ENCODE measurements at regions of chr2 and their contacts with region 1.

Region 1: GRCh38 chr2:216283038-216283900 is 89.0 kb downstream of the MARCHF4 start:
- DNase-seq: peak; percentile 93
- ATAC-seq: peak; percentile 96
- H3K4me3 Mint-ChIP-seq: peak overlapping the region; percentile 12; the same call in 1 of the 2 replicates
- H3K27ac Mint-ChIP-seq: no peak overlapping the region
- H3K4me1 Mint-ChIP-seq: peaks cover 66% of the 10 kb centered on the region
- H3K27me3 Mint-ChIP-seq: no peaks in the 10 kb centered on the region; the same call in 1 of the 2 replicates
- CTCF ChIP-seq: peak; percentile 78

Region 2: DNA sequence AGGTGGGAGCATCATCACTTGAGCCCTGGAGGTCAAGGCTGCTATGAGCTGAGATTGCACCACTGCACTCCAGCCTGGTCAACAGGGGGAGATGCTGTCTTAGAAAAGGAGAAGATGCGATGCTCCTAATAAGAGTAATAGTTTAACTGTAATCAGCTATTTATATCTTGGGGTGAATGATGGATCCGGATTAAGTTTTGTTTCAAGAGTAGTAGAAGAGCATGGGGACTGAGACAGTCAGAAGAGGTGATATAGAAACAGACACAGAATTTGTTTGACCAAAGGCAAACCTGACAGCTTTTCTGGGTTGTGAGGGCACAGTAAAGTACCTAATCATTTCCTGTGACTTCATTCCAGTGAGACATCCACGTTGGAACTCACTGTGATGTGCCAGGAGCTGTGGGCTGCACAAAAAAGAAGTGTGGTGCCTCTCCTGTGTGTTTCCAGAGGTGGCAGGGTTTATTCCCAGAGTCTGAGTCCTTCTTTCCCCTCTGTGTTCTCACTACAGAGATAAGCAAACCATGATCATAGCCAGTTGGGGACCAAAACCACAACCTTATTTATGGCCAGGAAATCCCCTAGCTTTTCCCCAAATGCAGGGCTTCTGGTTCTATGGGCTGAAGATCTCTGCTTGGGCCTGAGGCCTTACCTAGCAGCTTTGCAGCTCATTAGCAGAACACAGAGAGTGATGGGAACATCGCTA is 60.5 kb before region 1 on chr2:
- CTCF ChIA-PET with region 1: interaction called, 40 read pairs
- POLR2A ChIA-PET with region 1: no interaction called
- DNase-seq: peak; percentile 23
- ATAC-seq: peak; percentile 77
- H3K4me3 Mint-ChIP-seq: no peak overlapping the region
- H3K27ac Mint-ChIP-seq: no peak overlapping the region
- H3K4me1 Mint-ChIP-seq: no peaks in the 10 kb centered on the region; the same call in 1 of the 2 replicates
- H3K27me3 Mint-ChIP-seq: no peaks in the 10 kb centered on the region
- CTCF ChIP-seq: peak; percentile 15; the same call in 1 of the 2 replicates

Region 3: DNA sequence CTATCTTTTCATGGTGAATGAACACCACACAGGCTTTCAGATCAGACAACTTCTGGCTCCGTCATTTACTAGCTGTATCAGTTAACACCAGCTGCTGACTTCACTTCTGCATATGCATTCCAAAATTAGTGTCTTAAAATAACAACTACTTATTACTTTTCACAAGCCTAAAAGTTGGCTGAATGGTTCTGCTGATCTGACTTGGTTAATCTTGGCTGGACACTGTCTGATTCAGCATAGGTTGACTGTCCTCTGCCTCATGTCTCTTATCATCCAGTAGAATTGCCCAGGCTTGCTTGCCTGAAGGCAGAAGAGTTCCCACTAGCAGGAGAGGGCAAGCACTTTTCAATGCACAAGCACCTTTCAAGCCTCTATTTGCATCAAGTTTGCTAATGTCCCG is 16.3 kb after region 1 on chr2:
- CTCF ChIA-PET with region 1: interaction called, 38 read pairs
- POLR2A ChIA-PET with region 1: no interaction called
- DNase-seq: no peak
- ATAC-seq: peak; percentile 45
- H3K4me3 Mint-ChIP-seq: no peak overlapping the region
- H3K27ac Mint-ChIP-seq: no peak overlapping the region
- H3K4me1 Mint-ChIP-seq: peaks cover 33% of the 10 kb centered on the region
- H3K27me3 Mint-ChIP-seq: peaks cover 19% of the 10 kb centered on the region
- CTCF ChIP-seq: no peak

Region 4: GRCh38 chr2:216328347-216328746 is 45.1 kb after region 1 on chr2:
- CTCF ChIA-PET with region 1: interaction called, 15 read pairs
- POLR2A ChIA-PET with region 1: no interaction called
- DNase-seq: peak; percentile 17
- ATAC-seq: peak; percentile 61; the same call in 1 of the 2 replicates
- H3K4me3 Mint-ChIP-seq: no peak overlapping the region
- H3K27ac Mint-ChIP-seq: no peak overlapping the region
- H3K4me1 Mint-ChIP-seq: peaks cover 5% of the 10 kb centered on the region
- H3K27me3 Mint-ChIP-seq: no peaks in the 10 kb centered on the region
- CTCF ChIP-seq: no peak

Region 5: GRCh38 chr2:216371756-216372702 is 88.8 kb after region 1 on chr2 and contains the start of gene MARCHF4:
- CTCF ChIA-PET with region 1: interaction called, 11 read pairs
- POLR2A ChIA-PET with region 1: no interaction called
- DNase-seq: peak; percentile 87
- ATAC-seq: peak; percentile 67
- H3K4me3 Mint-ChIP-seq: peak within 1 kb of the TSS; percentile 86
- H3K27ac Mint-ChIP-seq: no peak within 1 kb of the TSS
- H3K4me1 Mint-ChIP-seq: peaks cover 30% of the 10 kb centered on the region
- H3K27me3 Mint-ChIP-seq: peaks cover 59% of the 10 kb centered on the region
- CTCF ChIP-seq: no peak
- total RNA-seq, gene MARCHF4: 1.7 to 2.6 TPM (median 1.7 TPM) in 3 replicates

Region 6: GRCh38 chr2:216404010-216404618 is 120.8 kb after region 1 on chr2:
- CTCF ChIA-PET with region 1: interaction called, 19 read pairs
- POLR2A ChIA-PET with region 1: no interaction called
- DNase-seq: peak; percentile 56
- ATAC-seq: peak; percentile 60
- H3K4me3 Mint-ChIP-seq: no peak overlapping the region
- H3K27ac Mint-ChIP-seq: no peak overlapping the region
- H3K4me1 Mint-ChIP-seq: peaks cover 28% of the 10 kb centered on the region
- H3K27me3 Mint-ChIP-seq: no peaks in the 10 kb centered on the region; the same call in 1 of the 2 replicates
- CTCF ChIP-seq: peak; percentile 94